HCT116 (cell line): ENCODE measurements at regions of chr14 and their contacts with region 1.

Region 1: DNA sequence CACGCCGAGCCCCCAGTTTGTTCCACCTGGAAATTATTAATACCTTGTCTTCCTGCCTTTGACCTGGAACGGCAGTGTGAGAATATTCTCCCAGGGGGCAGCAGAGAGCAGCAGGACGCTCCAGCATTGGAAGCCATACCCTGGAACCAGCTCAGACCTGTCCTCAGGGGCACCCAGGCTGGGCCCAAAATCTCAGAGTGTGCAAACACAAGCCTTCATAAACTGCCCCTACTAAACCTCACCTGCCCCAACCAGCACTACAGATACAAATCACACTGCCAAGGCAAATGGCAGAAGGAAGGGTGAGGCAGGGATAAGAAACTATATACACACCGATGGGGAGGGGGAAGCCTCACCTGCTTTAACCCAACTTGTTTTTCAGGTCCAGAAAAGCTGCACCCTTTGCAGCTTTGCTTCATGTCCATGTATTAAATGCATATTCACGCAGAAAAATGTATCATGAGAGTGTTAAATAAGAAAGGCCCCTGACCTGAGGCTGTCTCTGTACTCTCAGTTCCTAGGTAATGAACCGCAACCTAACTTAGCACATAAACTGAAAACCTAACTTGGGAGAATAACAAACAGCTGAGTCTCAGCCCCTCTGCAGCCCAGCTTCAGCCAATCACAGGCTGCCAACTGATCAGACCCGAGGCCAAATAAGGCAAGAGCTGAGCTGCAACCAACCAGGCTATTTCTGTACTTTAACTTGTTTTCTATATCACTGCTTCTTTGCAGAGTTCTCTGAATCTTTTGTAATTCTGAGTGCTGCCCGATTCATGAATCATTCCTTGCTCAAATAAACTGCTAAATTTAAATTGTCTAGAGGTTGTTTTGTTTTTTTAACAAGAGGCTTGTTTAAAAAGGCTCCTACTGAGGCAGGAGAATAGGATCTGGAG is 130.1 kb downstream of the SPTSSA start:
- DNase-seq: peak; percentile 57
- ATAC-seq: peak; percentile 96
- H3K4me3 ChIP-seq: no peak overlapping the region
- H3K27ac ChIP-seq: peak overlapping the region; percentile 38
- H3K4me1 ChIP-seq: peaks cover 6 to 17% of the 10 kb centered on the region in 2 experiments; a peak in 3 of 4 replicates
- H3K27me3 ChIP-seq: no peaks in the 10 kb centered on the region
- CTCF ChIP-seq: peak; percentile 69 to 93 (median 86); a peak in 5 of 6 replicates
- POLR2A ChIP-seq: peak; percentile 31
- RAD21 ChIP-seq: peak; percentile 82

Region 2: DNA sequence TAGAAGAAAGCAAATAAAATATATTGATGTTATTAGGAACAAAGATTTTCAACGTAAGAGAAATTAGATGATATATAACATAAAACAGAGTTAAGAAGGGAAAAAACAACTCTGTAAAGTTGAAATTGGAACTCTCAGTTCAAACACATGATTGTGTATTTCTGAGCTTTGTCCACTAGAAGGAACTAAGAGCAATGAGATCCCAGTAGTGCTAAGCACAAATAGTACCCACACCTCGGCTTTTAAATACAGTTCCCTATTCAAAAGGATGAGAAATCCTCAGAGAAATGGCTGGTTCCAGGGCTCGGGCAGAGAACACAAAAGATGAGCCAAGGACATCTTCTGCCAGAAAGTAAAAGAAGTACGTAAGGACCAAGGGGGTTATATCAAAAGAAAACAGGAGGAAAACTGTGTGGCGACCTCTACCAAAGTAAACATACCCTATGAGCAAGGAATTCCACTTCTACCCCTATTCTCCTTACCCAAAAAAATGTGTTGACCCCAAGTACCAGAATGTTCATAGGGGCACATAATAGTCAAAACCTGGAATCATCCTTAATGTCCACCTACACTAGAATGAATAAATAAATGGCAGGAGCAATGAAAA is 33.4 kb after region 1 on chr14:
- CTCF ChIA-PET with region 1: interaction called, 10 read pairs
- POLR2A ChIA-PET with region 1: no interaction called
- RAD21 ChIA-PET with region 1: no interaction called
- intact Hi-C with region 1: no loop called
- DNase-seq: no peak
- ATAC-seq: peak; percentile 62
- H3K4me3 ChIP-seq: no peak overlapping the region
- H3K27ac ChIP-seq: no peak overlapping the region
- H3K4me1 ChIP-seq: no peaks in the 10 kb centered on the region
- H3K27me3 ChIP-seq: no peaks in the 10 kb centered on the region
- CTCF ChIP-seq: peak in 2 of 3 experiments; percentile 1 to 24; a peak in 1 of 6 replicates
- POLR2A ChIP-seq: no peak
- RAD21 ChIP-seq: peak; percentile 38

Region 3: DNA sequence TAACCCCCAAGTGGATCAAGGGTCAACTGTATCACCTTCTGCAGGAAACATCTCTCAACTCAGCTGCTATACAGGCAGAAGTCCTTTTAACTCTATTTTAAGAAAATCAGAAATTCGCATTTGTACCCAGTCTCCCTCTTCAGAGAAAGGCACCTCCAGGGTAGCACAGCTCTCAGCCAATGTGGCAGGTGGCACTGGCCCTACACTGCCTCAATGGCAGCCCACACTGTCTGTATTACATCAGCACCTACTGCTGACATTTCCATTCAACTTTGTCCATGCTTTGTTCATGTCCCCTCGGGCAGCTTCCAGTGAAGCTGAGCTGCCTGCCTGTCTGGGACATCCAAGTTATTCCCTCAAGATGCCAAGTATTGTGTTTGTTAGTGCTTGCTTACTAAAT is 121.3 kb after region 1 on chr14:
- CTCF ChIA-PET with region 1: no interaction called
- POLR2A ChIA-PET with region 1: no interaction called
- RAD21 ChIA-PET with region 1: no interaction called
- intact Hi-C with region 1: no loop called
- DNase-seq: no peak
- ATAC-seq: no peak
- H3K4me3 ChIP-seq: no peak overlapping the region
- H3K27ac ChIP-seq: no peak overlapping the region
- H3K4me1 ChIP-seq: no peaks in the 10 kb centered on the region
- H3K27me3 ChIP-seq: no peaks in the 10 kb centered on the region
- CTCF ChIP-seq: no peak
- POLR2A ChIP-seq: no peak
- RAD21 ChIP-seq: no peak

Region 4: DNA sequence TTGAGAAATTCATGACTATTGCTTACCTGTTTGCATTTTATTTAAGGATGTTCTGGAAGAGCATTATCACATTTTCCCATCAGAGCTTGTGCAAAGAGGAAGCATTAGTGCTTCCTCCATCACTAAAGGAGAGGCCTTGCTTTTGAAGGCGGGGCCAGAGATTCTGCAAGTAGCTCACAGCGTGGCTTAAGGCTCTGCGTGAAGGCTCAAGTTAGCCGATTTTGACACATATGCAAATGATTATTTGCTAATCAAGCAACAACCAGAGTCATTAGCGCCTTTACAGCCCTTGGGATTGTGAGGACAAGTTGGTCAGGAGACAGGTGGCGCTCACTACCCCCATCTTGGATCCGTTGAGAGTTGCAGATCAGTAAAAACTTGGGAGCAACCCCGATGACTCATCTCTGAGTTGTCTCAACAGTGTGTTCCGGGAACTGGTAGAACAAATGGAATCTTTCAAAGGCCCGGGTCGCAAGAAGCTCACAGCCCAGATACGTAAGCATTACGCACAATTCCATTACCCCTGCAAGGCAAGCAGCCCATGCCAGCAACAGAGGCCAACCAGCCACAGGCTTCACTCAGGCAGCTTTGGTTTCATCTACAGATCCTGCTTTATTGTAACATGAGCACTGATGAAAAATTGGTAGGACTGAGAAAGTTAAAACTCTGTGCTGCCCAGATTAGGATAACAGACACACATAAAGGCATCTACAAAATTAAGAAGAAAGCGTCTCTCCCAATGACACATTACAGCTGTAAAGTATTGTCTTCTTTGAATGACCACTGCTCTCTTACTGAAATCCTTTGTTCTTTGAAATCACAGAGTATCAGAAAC is 164.9 kb after region 1 on chr14:
- CTCF ChIA-PET with region 1: interaction called, 99 read pairs
- POLR2A ChIA-PET with region 1: interaction called, 25 read pairs
- RAD21 ChIA-PET with region 1: interaction called, 12 to 21 read pairs
- intact Hi-C with region 1: loop called (anchors 1 kb)
- DNase-seq: peak; percentile 97
- ATAC-seq: peak; percentile 88
- H3K4me3 ChIP-seq: peak overlapping the region; percentile 19 to 43; a peak in 3 of 4 replicates
- H3K27ac ChIP-seq: peak overlapping the region; percentile 62
- H3K4me1 ChIP-seq: peaks cover 21 to 36% of the 10 kb centered on the region in 2 experiments
- H3K27me3 ChIP-seq: no peaks in the 10 kb centered on the region
- CTCF ChIP-seq: peak in 2 of 3 experiments; percentile 12 to 22; a peak in 2 of 6 replicates
- POLR2A ChIP-seq: no peak
- RAD21 ChIP-seq: peak; percentile 19; the same call in 1 of the 2 replicates

Region 5: GRCh38 chr14:34502494-34503225 is 170.7 kb after region 1 on chr14:
- CTCF ChIA-PET with region 1: interaction called, 99 read pairs
- POLR2A ChIA-PET with region 1: interaction called, 25 read pairs
- RAD21 ChIA-PET with region 1: interaction called, 12 to 21 read pairs
- intact Hi-C with region 1: loop called (anchors 1 kb)
- DNase-seq: no peak
- ATAC-seq: no peak
- H3K4me3 ChIP-seq: no peak overlapping the region
- H3K27ac ChIP-seq: no peak overlapping the region
- H3K4me1 ChIP-seq: peaks cover 7 to 15% of the 10 kb centered on the region in 2 experiments
- H3K27me3 ChIP-seq: no peaks in the 10 kb centered on the region
- CTCF ChIP-seq: no peak
- POLR2A ChIP-seq: no peak
- RAD21 ChIP-seq: no peak